Activated T-helper 2 cell treated with anti-CD3 and anti-CD28 coated beads, Interferon-gamma antibody, Interleukin-2, Interleukin-4, amounts not matched to agents 10 μg/mL and 5 μg/mL and 100 μg/mL, durations not matched to agents 14 hours and 24 hours and 36 hours (primary cell): ENCODE measurements at regions of chr19 and their contacts with region 1.

Region 1: GRCh38 chr19:34171877-34172660 is at the start of gene LSM14A:
- DNase-seq: peak; percentile 91
- H3K4me3 Mint-ChIP-seq: peak within 1 kb of the TSS; percentile 98
- H3K27ac Mint-ChIP-seq: peak within 1 kb of the TSS; percentile 98
- H3K4me1 Mint-ChIP-seq: peaks cover 23% of the 10 kb centered on the region
- H3K27me3 Mint-ChIP-seq: peaks cover 10% of the 10 kb centered on the region
- total RNA-seq, gene LSM14A: 95.8 and 101 TPM in 2 replicates

Region 2: DNA sequence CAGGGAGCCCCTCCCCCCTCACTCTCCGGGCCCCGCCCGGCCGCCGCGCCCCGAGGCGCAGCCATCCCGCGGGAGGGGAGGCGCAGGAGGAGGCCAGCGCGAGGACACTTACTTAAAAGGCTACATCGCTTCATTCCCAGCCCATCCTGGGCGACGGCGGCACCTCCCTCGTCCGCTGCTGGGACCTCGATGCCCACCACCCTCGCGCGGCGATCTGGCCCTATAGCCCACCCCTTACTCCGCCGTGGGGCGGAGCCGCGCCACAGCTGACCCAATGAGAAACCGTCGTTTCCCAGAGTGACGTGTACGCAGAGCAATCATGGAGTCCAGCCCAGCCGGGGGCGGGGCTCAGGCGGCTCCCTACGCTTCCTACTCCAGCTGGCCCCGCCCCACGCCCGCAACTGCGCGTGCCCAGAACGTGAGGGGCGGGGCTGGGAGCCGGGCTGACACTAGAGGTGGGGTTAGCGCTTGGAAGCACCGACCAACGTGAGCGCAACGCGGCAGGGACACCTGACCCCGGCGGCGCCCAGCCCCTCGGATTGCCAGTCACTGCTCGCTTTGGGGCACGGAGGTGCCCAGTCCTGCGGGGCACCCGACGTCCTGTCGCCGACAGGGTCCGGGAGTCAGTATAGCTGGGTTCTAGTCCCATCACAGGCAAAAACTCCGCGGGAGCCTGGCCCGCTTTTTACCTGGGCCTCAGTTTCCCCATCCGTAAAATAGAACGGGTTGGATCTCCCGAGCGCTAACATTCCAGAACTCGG is 1496.9 kb before region 1 on chr19 and contains the start of gene ANKRD27:
- intact Hi-C with region 1: loop called (anchors 10 kb)
- DNase-seq: peak; percentile 96
- H3K4me3 Mint-ChIP-seq: peak within 1 kb of the TSS; percentile 95
- H3K27ac Mint-ChIP-seq: peak within 1 kb of the TSS; percentile 84
- H3K4me1 Mint-ChIP-seq: peaks cover 26% of the 10 kb centered on the region
- H3K27me3 Mint-ChIP-seq: peaks cover 15% of the 10 kb centered on the region
- total RNA-seq, gene ANKRD27: 35.6 and 38.3 TPM in 2 replicates

Region 3: DNA sequence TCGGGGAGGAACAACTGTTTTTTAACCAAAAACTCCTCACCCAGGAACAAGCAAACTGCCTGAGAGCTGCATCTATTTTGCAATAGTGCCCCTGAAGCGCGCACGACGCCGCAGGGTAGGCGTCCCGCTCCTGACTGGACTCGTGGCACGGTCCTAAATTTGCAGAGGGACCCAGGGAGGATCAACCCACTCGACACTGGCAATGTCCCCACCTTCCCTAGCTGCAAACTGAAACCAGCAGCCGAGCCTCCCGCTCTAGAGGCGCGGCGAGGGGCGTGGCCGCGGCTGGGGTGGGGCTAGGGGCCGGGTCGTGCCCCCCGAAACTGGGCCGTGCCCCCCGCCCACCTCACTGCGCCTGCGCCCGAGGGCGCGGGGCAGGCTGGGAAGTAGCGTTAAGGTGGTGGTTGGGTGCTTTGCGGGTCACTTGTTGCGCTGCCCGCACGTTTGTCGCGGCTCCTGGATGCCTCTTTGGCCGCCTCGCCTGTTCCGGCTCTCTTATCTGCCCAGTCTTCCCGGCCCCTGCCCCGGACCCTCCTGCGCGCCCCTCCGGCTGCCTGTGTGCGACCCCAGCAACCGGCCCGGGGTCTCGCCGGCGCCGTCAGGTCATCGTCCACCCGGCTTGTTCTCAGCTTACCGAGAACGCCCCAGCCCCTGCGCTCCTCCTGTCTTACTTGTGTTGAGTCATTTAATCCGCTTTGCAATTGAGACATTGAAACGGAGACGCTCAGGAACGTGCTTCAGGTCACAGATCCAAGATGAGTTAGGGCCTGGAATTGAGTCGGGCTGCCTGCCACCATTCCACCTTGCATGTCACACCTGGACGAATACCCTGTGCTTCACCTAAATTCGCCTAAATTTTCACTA is 37.6 kb before region 1 on chr19:
- intact Hi-C with region 1: loop called (anchors 1 kb)
- DNase-seq: peak; percentile 84
- H3K4me3 Mint-ChIP-seq: peak overlapping the region; percentile 88
- H3K27ac Mint-ChIP-seq: peak overlapping the region; percentile 87
- H3K4me1 Mint-ChIP-seq: peaks cover 10% of the 10 kb centered on the region
- H3K27me3 Mint-ChIP-seq: peaks cover 7% of the 10 kb centered on the region

Region 4: GRCh38 chr19:34184880-34185491 is 12.9 kb after region 1 on chr19:
- intact Hi-C with region 1: no loop called
- DNase-seq: no peak
- H3K4me3 Mint-ChIP-seq: no peak overlapping the region
- H3K27ac Mint-ChIP-seq: no peak overlapping the region
- H3K4me1 Mint-ChIP-seq: peaks cover 43% of the 10 kb centered on the region
- H3K27me3 Mint-ChIP-seq: no peaks in the 10 kb centered on the region

Region 5: DNA sequence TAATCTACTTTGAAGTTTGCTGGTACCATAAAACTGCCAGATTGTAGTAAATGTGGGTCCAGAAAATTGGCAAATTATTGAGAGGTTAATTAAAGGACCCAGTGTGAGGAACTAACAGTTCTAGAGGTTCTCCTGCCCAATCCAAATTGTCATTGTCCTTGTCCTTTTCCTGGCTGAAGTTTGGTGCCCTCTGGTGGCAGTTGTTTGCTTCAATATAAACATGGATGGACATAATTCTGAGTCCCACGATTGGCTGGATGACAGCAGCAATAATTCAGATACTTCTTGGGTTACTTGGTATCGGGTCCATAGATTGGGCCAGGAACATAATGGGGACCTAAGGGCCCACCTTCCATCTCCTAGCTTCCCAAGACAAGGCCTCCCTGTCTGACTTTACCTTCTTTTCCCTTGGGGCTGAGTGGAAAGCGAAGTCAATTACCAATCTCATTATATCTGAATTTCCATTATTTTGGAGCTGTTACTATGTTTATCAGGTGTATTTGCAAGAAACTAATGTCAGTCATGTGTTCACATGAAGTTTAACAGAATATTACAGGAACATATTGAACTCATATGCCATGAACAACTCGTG is 48.5 kb after region 1 on chr19:
- intact Hi-C with region 1: loop called (anchors 2 kb)
- DNase-seq: peak; percentile 24
- H3K4me3 Mint-ChIP-seq: no peak overlapping the region
- H3K27ac Mint-ChIP-seq: no peak overlapping the region
- H3K4me1 Mint-ChIP-seq: peaks cover 44% of the 10 kb centered on the region
- H3K27me3 Mint-ChIP-seq: no peaks in the 10 kb centered on the region

Region 6: GRCh38 chr19:34305221-34306083 is 133.4 kb after region 1 on chr19:
- intact Hi-C with region 1: no loop called
- DNase-seq: no peak
- H3K4me3 Mint-ChIP-seq: no peak overlapping the region
- H3K27ac Mint-ChIP-seq: no peak overlapping the region
- H3K4me1 Mint-ChIP-seq: peaks cover 6% of the 10 kb centered on the region
- H3K27me3 Mint-ChIP-seq: no peaks in the 10 kb centered on the region

Region 7: GRCh38 chr19:34351382-34351826 is 179.3 kb after region 1 on chr19:
- intact Hi-C with region 1: loop called (anchors 5 kb)
- DNase-seq: no peak
- H3K4me3 Mint-ChIP-seq: no peak overlapping the region
- H3K27ac Mint-ChIP-seq: peak overlapping the region; percentile 81
- H3K4me1 Mint-ChIP-seq: peaks cover 16% of the 10 kb centered on the region
- H3K27me3 Mint-ChIP-seq: no peaks in the 10 kb centered on the region

Region 8: GRCh38 chr19:34677386-34678084 is 505.5 kb after region 1 on chr19 and contains the start of gene ZNF302:
- intact Hi-C with region 1: loop called (anchors 10 kb)
- DNase-seq: peak; percentile 94
- H3K4me3 Mint-ChIP-seq: peak within 1 kb of the TSS; percentile 93
- H3K27ac Mint-ChIP-seq: peak within 1 kb of the TSS; percentile 99
- H3K4me1 Mint-ChIP-seq: peaks cover 23% of the 10 kb centered on the region
- H3K27me3 Mint-ChIP-seq: peaks cover 6% of the 10 kb centered on the region
- total RNA-seq, gene ZNF302: 14.1 and 14.7 TPM in 2 replicates